ENCODE measurements at regions of chr3 and their contacts with region 1.

Region 1: GRCh38 chr3:172476347-172476746 is 28.1 kb upstream of the GHSR start:
- DNase-seq: no peak
- ATAC-seq: no peak
- H3K4me3 ChIP-seq: peak overlapping the region; percentile 77
- H3K27ac ChIP-seq: no peak overlapping the region
- H3K4me1 ChIP-seq: 0 out of 2 replicates have a peak, but pooled peaks cover 5% of the 10 kb centered on the region
- H3K27me3 ChIP-seq: no peaks in the 10 kb centered on the region
- CTCF ChIP-seq: no peak

Region 2: GRCh38 chr3:171646357-171647133 is 829.8 kb before region 1 on chr3:
- CTCF ChIA-PET with region 1: no interaction called
- POLR2A ChIA-PET with region 1: no interaction called
- intact Hi-C with region 1: loop called (anchors 5 kb)
- DNase-seq: peak; percentile 69
- ATAC-seq: peak; percentile 40
- H3K4me3 ChIP-seq: no peak overlapping the region
- H3K27ac ChIP-seq: no peak overlapping the region
- H3K4me1 ChIP-seq: no peaks in the 10 kb centered on the region
- H3K27me3 ChIP-seq: no peaks in the 10 kb centered on the region
- CTCF ChIP-seq: peak; percentile 81

Region 3: DNA sequence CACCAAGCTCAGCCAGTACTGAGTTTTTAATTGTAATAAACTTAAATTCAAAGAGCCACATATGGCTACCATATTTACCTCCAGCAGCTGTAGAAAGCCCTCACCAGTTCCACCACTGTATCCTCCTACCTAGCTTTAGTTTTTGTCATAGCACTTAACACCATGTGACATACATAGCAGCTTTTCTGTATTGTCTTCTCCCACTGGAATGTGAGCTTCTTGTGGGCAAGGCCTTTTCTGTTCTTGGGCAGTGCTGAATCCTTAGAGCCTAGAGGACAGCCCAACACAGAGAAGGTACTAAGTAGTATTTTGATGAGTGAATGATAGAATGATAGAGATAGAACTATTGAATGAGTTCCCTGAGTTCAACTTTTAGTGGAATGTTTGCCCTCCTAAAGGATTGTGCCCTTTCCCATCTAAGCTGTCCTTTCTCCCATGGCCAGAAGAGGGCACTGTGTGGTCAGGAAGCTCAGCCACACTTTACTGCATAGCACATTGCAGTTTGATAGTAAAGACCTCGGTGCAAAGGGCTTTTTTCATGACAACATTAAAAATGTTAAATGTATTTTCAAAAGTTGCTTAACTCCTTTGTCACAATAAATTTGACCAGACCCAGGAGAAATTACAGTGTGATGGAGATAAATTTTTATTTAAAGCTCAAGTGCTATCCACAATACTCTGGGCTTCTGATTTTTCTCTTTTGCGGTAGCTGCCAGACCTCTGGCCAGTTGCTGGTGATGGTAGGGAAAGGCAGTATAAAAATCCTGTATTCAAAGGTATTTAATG is 143.9 kb before region 1 on chr3:
- CTCF ChIA-PET with region 1: interaction called, 5 read pairs
- POLR2A ChIA-PET with region 1: interaction called, 11 read pairs
- intact Hi-C with region 1: loop called (anchors 1 kb)
- DNase-seq: peak; percentile 75
- ATAC-seq: peak; percentile 94
- H3K4me3 ChIP-seq: no peak overlapping the region
- H3K27ac ChIP-seq: no peak overlapping the region
- H3K4me1 ChIP-seq: no peaks in the 10 kb centered on the region
- H3K27me3 ChIP-seq: no peaks in the 10 kb centered on the region
- CTCF ChIP-seq: peak; percentile 93

Region 4: GRCh38 chr3:172355839-172356238 is 120.5 kb before region 1 on chr3:
- CTCF ChIA-PET with region 1: interaction called, 4 read pairs
- POLR2A ChIA-PET with region 1: no interaction called
- intact Hi-C with region 1: loop called (anchors 1 kb)
- DNase-seq: peak; percentile 88
- ATAC-seq: peak; percentile 95
- H3K4me3 ChIP-seq: no peak overlapping the region
- H3K27ac ChIP-seq: peak overlapping the region; percentile 40
- H3K4me1 ChIP-seq: peaks cover 18% of the 10 kb centered on the region
- H3K27me3 ChIP-seq: no peaks in the 10 kb centered on the region
- CTCF ChIP-seq: no peak

Region 5: DNA sequence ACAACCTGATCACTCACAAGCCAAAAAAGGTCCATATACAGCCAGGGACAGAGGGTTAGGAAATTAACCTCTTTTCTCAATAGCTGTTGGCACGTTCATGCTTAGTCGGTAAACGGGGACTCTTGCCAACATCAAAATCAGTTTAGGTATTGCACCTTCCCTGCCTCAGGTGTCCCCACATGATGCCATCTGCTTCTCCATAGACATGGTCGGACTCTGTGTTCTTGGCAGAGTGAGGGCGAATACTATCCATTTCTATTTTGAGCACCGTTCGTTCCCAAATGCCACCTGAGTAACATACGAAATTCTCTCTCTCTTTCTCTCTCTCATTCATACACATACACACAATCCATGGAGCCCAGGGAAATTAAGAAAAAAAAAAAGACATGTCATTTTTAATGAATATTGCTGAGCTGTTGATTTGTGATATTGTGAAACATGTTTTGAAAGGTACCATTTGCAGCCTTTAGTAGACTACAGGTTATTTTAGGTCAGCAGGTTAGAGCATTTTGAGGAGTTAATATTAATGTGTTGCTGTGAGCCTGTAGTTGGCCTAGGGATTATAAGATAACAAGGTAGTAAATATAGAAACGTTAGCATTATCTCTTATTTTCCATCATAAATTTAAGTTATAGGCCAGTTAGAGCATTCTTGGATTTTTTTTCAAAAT is 106.6 kb before region 1 on chr3:
- CTCF ChIA-PET with region 1: no interaction called
- POLR2A ChIA-PET with region 1: interaction called, 9 read pairs
- intact Hi-C with region 1: loop called (anchors 1 kb)
- DNase-seq: no peak
- ATAC-seq: no peak; the same call in 1 of the 2 replicates
- H3K4me3 ChIP-seq: no peak overlapping the region
- H3K27ac ChIP-seq: no peak overlapping the region
- H3K4me1 ChIP-seq: no peaks in the 10 kb centered on the region
- H3K27me3 ChIP-seq: no peaks in the 10 kb centered on the region
- CTCF ChIP-seq: no peak

Region 6: DNA sequence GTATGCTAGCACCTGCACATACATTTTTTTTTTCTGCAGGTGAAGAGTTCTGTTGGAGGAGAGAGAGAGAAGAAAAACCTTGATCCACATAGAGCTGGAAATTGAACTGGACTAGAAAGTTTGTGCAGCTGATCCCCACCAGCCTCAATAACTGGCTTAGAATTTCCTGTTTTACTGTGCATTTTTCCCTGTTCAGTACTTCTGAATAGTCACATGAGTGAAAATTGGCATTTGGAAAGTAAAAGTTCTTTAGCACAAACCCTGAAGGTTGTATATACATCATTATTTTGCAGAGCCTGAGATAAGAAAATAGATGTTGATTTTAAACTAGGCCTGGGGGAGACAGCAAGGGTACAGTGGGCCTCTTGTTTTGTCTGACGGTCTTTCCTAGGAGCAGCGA is 70.4 kb before region 1 on chr3:
- CTCF ChIA-PET with region 1: no interaction called
- POLR2A ChIA-PET with region 1: no interaction called
- intact Hi-C with region 1: loop called (anchors 5 kb)
- DNase-seq: no peak
- ATAC-seq: no peak
- H3K4me3 ChIP-seq: no peak overlapping the region
- H3K27ac ChIP-seq: no peak overlapping the region
- H3K4me1 ChIP-seq: no peaks in the 10 kb centered on the region
- H3K27me3 ChIP-seq: no peaks in the 10 kb centered on the region
- CTCF ChIP-seq: no peak

Region 7: GRCh38 chr3:172461530-172462138 is 14.7 kb before region 1 on chr3:
- CTCF ChIA-PET with region 1: interaction called, 16 read pairs
- POLR2A ChIA-PET with region 1: no interaction called
- intact Hi-C with region 1: no loop called
- DNase-seq: peak; percentile 68
- ATAC-seq: peak; percentile 37; the same call in 1 of the 2 replicates
- H3K4me3 ChIP-seq: no peak overlapping the region
- H3K27ac ChIP-seq: no peak overlapping the region
- H3K4me1 ChIP-seq: no peaks in the 10 kb centered on the region
- H3K27me3 ChIP-seq: no peaks in the 10 kb centered on the region
- CTCF ChIP-seq: peak; percentile 93